ENCODE measurements at regions of chr3 and their contacts with region 1.

Region 1: GRCh38 chr3:107676469-107677309 is 153.9 kb downstream of the BBX start:
- DNase-seq: no peak
- H3K4me3 ChIP-seq: no peak overlapping the region
- CTCF ChIP-seq: peak; percentile 20

Region 2: DNA sequence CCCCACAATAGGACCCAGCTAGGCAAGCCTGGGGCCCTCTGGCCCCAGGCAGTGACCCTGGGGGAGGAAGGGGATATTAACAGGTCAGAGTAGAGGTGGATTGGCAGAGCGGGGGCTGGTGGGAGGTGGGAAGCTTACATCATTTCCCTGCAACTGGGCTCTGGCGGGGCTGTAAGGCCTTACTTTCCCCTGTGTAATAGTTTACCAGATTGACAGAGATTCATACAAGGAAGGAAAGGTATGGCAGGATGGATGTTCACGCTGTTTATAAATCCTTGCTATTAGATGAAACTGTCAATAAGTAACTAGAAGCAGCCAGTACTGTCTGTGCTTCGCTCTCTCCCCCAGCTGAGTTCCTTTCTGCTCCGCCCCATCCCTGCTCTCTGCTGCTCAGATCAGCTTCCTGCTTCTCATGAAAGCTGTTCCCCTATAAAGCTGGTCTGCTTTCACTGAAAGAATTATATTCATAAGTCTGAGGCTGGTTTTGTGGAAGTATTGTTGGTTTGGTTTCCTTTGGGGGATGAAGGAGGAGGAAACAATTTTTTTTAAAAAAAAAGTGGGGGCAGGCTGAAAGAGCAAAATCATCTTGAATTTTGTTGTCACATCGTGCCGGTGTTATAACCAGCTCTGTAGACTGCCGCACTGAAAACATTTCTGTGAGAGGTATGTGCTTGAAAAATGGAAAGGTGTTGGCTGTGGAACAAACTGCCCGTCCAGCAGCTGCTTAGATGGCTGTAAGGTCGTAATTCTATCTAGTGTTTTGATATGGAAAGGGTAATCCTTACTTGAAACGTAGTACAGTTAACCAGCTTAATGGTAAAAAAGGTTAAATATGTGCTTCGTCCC is 77.5 kb before region 1 on chr3:
- in situ Hi-C with region 1: loop called (anchors 5 kb)
- DNase-seq: no peak
- H3K4me3 ChIP-seq: peak overlapping the region; percentile 11
- CTCF ChIP-seq: no peak

Region 3: DNA sequence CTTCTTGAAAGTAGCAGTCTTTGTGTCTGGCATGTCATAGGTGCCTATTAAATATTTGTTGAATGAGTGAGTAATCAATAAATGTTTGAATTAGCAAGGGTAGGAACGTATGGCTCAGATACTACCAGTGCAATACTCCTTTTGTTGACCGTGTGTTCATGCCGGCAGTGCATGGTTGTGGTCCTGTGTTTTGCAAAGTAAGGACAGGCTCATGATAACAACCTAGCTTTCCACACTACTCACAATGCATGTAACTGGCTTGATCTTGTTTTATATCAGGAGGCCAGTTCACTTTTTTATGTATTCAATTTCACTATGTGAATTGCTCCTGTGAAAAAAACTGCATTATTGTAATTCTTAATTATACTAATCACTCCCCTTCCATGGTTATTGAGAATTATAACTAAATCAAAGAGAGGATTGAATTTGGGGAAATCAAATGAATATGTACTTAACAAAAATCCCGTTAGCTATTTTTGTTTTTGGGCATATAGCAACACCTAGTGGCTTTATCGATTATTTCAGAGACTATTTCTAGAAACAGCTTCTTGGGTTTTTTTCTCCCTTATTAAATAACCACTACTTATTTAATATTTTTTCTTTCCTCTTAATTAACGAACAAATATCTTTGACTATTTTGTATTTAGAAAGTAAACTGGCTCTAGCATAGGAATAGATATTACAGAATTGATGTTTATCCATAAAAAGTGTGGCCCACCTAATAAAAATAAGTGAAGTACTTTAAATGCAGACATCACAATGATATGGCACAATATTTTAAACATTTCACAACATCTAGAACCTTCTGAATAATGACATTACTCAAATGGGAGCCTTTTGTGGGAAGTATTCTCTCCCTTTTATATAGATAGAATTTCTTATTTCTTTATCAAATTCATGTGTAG is 64.6 kb after region 1 on chr3:
- in situ Hi-C with region 1: loop called (anchors 10 kb)
- DNase-seq: peak; percentile 23
- H3K4me3 ChIP-seq: no peak overlapping the region
- CTCF ChIP-seq: peak; percentile 23

Measured in astrocyte of the cerebellum (primary cell).